K562 (cell line): ENCODE measurements at regions of chr3 and their contacts with region 1.

Region 1: GRCh38 chr3:44966750-44967278 is 9.2 kb downstream of the ZDHHC3 start:
- DNase-seq: peak; percentile 69 to 83 (median 82)
- ATAC-seq: peak; percentile 76
- H3K4me3 ChIP-seq: no peak overlapping the region
- H3K27ac ChIP-seq: peak overlapping the region; percentile 30; the same call in 2 of the 3 replicates
- H3K4me1 ChIP-seq: peaks cover 35 to 53% of the 10 kb centered on the region in 2 experiments
- H3K27me3 ChIP-seq: no peaks in the 10 kb centered on the region
- CTCF ChIP-seq: no peak
- EP300 ChIP-seq: peak; percentile 37; the same call in 1 of the 2 replicates
- POLR2A ChIP-seq: no peak
- RAD21 ChIP-seq: no peak

Region 2: DNA sequence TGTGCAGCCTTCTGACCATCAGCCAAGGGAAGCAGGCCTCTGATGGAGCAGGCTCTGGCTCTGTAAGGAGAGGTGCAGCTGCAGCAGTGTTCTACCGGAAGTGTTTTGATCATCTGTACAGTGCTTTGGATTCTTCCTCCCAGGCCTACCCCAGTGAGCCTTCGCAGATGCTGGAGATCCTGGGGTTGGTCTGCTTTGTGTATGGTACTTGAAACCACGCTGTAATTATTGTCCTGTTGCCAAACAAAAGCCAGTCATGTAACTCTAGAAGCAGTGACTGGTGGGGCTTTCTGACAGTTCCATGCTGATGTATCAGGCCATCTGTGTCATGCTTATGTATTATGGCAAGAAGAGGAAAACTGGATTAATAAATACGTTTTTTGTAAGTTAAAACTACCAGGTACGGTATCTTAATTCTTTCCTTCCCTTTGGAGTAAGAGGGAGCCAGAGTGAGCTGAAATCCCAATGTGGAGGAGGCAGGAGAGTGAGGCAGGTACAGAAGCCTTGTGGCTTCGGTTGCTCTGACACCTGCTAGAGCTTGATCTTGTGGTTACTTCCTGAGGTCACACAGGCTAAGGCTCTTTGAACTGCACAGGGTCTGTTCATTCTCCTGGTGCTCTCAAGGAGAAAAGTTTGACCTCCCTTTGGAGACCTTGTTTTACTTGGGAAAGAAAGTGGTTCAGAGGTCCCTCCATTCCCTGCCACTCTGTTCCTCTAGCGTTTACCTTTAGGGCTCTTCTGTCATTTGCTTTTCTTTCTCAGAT is 101.4 kb before region 1 on chr3:
- CTCF ChIA-PET with region 1: no interaction called
- POLR2A ChIA-PET with region 1: no interaction called
- in situ Hi-C with region 1: no loop called
- intact Hi-C with region 1: no loop called
- DNase-seq: no peak
- ATAC-seq: no peak
- H3K4me3 ChIP-seq: no peak overlapping the region
- H3K27ac ChIP-seq: no peak overlapping the region
- H3K4me1 ChIP-seq: no peaks in the 10 kb centered on the region
- H3K27me3 ChIP-seq: no peaks in the 10 kb centered on the region
- CTCF ChIP-seq: no peak
- EP300 ChIP-seq: no peak
- POLR2A ChIP-seq: no peak
- RAD21 ChIP-seq: no peak

Region 3: GRCh38 chr3:44950275-44950734 is 16.5 kb before region 1 on chr3:
- CTCF ChIA-PET with region 1: no interaction called
- POLR2A ChIA-PET with region 1: interaction called, 11 read pairs
- in situ Hi-C with region 1: no loop called
- intact Hi-C with region 1: no loop called
- DNase-seq: no peak
- ATAC-seq: no peak
- H3K4me3 ChIP-seq: no peak overlapping the region
- H3K27ac ChIP-seq: no peak overlapping the region
- H3K4me1 ChIP-seq: no peaks in the 10 kb centered on the region
- H3K27me3 ChIP-seq: no peaks in the 10 kb centered on the region
- CTCF ChIP-seq: no peak
- EP300 ChIP-seq: no peak
- POLR2A ChIP-seq: no peak
- RAD21 ChIP-seq: no peak

Region 4: GRCh38 chr3:45011756-45012508 is 45.1 kb after region 1 on chr3:
- CTCF ChIA-PET with region 1: no interaction called
- POLR2A ChIA-PET with region 1: no interaction called
- in situ Hi-C with region 1: no loop called
- intact Hi-C with region 1: no loop called
- DNase-seq: no peak
- ATAC-seq: no peak
- H3K4me3 ChIP-seq: no peak overlapping the region
- H3K27ac ChIP-seq: no peak overlapping the region
- H3K4me1 ChIP-seq: no peaks in the 10 kb centered on the region
- H3K27me3 ChIP-seq: no peaks in the 10 kb centered on the region
- CTCF ChIP-seq: no peak
- EP300 ChIP-seq: no peak
- POLR2A ChIP-seq: no peak
- RAD21 ChIP-seq: no peak